A673 (cell line): ENCODE measurements at regions of chr18 and their contacts with region 1.

Region 1: DNA sequence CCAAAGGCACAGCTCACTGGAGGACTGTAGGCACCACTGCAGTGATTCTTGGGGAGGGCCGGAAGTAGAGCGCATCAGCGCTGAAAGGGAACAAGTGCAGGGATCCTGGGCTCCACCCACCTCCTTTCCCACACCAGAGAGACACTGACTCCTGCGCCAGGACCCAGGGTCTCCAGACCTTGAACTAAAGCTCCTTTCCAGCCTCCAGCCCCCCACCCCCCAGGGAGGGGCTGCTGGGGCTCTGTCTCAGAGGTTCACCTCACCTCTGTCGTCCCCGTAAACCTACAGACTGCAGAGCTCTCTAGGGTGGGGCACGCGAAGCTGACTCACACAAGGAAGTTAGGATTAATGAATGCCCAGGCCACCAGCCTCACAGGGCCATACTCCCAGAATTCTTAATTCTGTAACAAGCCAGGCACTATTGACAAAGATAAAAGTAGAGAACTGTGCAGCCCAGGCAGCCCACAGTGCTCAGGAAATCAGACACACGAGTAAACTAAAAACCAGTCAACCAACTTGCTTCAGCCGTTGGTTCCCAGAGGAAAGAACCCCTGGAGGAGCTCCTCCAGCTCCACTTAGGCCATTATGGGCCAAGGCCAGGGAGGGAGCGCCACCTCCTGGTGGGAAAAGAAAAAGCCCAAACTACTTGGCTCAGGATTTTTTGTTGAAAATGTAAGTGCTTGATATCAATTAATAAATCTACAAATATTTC is 45.1 kb upstream of the ACAA2 start:
- DNase-seq: peak; percentile 79
- H3K4me3 ChIP-seq: no peak overlapping the region
- H3K27ac ChIP-seq: no peak overlapping the region
- H3K4me1 ChIP-seq: no peaks in the 10 kb centered on the region
- H3K27me3 ChIP-seq: no peaks in the 10 kb centered on the region
- CTCF ChIP-seq: peak; percentile 95

Region 2: GRCh38 chr18:48675352-48675761 is 1183.1 kb before region 1 on chr18:
- CTCF ChIA-PET with region 1: no interaction called
- POLR2A ChIA-PET with region 1: no interaction called
- intact Hi-C with region 1: loop called (anchors 10 kb)
- DNase-seq: peak; percentile 85
- H3K4me3 ChIP-seq: no peak overlapping the region
- H3K27ac ChIP-seq: no peak overlapping the region
- H3K4me1 ChIP-seq: no peaks in the 10 kb centered on the region
- H3K27me3 ChIP-seq: no peaks in the 10 kb centered on the region
- CTCF ChIP-seq: peak; percentile 91

Region 3: DNA sequence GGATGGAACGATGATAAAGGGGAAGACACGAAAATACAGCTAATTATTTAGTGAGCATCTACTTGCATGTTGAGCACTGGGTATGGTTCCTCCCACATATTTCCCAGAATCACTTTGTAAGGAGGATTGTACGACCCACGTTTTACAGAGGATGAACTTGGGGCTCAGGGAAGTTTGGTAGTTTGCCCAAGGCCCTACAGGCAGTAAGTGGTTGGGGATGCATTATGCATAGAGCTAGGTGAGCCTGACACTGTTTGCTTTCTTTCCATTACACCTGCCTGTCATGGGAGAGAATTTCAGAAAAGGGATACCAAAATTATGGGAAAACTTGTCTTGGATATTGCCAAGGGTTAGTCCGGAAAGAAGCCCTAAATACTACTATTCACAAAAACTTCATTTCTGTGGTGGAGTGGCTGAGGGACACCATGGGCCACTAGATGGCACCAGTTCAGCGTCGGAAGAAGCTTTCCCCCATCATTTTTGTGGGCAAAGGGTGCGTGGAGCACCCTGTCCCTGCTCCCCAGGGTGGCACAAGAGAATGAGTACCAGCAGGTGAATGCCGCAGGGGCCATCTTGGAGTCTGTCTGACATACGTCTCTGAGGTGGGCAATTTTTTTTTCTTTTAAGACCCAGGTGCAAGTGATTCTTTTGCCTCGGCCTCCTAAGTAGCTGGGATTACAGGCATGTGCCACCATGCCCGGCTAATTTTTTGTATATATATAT is 347.9 kb before region 1 on chr18:
- CTCF ChIA-PET with region 1: interaction called, 51 read pairs
- POLR2A ChIA-PET with region 1: interaction called, 3 read pairs
- intact Hi-C with region 1: loop called (anchors 1 kb)
- DNase-seq: peak; percentile 74
- H3K4me3 ChIP-seq: no peak overlapping the region
- H3K27ac ChIP-seq: no peak overlapping the region
- H3K4me1 ChIP-seq: peaks cover 2% of the 10 kb centered on the region
- H3K27me3 ChIP-seq: no peaks in the 10 kb centered on the region
- CTCF ChIP-seq: peak; percentile 92

Region 4: GRCh38 chr18:49656073-49656591 is 202.3 kb before region 1 on chr18:
- CTCF ChIA-PET with region 1: interaction called, 3 read pairs
- POLR2A ChIA-PET with region 1: no interaction called
- intact Hi-C with region 1: loop called (anchors 10 kb)
- DNase-seq: peak; percentile 87
- H3K4me3 ChIP-seq: no peak overlapping the region
- H3K27ac ChIP-seq: no peak overlapping the region
- H3K4me1 ChIP-seq: peaks cover 12% of the 10 kb centered on the region
- H3K27me3 ChIP-seq: no peaks in the 10 kb centered on the region
- CTCF ChIP-seq: no peak

Region 5: GRCh38 chr18:49898421-49898820 is 40.0 kb after region 1 on chr18:
- CTCF ChIA-PET with region 1: interaction called, 10 read pairs
- POLR2A ChIA-PET with region 1: no interaction called
- intact Hi-C with region 1: no loop called
- DNase-seq: peak; percentile 79
- H3K4me3 ChIP-seq: no peak overlapping the region
- H3K27ac ChIP-seq: no peak overlapping the region
- H3K4me1 ChIP-seq: no peaks in the 10 kb centered on the region
- H3K27me3 ChIP-seq: peaks cover 23% of the 10 kb centered on the region
- CTCF ChIP-seq: no peak